ENCODE measurements at regions of chr10 and their contacts with region 1.

Region 1: DNA sequence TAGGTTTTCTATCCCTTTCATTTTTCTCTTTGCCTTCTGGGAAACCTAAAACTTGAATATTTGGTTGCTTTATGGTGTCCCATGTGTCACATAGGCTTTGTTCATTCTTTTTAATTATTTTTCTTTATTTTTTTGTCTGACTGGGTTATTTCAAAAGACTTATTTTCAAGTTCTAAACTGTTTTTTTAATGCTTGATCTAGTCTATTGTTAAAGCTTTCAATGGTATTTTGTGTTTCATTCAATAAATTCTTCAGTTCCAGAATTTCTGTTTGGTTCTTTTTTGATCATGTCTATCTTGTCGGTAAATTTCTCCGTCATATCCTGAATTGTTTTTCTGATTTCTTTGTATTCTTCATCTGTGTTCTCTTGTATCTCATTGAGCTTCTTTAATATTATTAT is 86.8 kb downstream of the NPS start:
- DNase-seq: no peak
- ATAC-seq: no peak
- H3K4me3 ChIP-seq: no peak overlapping the region
- H3K27ac ChIP-seq: no peak overlapping the region
- H3K4me1 ChIP-seq: peaks cover 0 to 2% (median 0%) of the 10 kb centered on the region in 12 donors
- H3K27me3 ChIP-seq: peaks cover 0 to 4% (median 0%) of the 10 kb centered on the region in 9 donors
- CTCF ChIP-seq: no peak
- POLR2A ChIP-seq: no peak

Region 2: DNA sequence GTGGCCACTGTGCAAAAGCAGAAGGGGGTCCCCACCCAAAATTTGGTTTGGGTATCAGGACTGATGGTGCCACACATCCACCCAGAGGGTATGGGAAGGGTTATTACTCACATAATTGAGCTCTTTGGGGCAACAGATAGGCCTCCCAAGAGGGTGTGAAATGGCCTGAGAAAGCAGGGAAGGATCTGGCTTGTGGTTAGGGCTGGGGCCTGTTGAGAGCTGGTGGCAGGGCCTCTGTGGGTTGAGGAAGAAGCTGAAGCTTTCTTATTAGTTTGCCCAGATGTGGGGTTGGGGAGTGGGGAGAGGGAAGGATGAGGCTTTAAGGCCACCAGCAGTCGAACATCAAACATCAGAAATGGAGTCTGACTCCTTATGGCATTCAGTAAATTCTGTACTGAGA is 508.7 kb after region 1 on chr10:
- intact Hi-C with region 1: loop called in 1 of 10 experiments (anchors 5 kb)
- DNase-seq: no peak
- ATAC-seq: no peak
- H3K4me3 ChIP-seq: no peak overlapping the region
- H3K27ac ChIP-seq: no peak overlapping the region
- H3K4me1 ChIP-seq: peaks cover 0 to 2% (median 0%) of the 10 kb centered on the region in 12 donors
- H3K27me3 ChIP-seq: peaks cover 0 to 8% (median 4%) of the 10 kb centered on the region in 9 donors
- CTCF ChIP-seq: no peak
- POLR2A ChIP-seq: no peak

Measured in heart left ventricle (tissue), 16 donors.